ENCODE measurements at regions of chr5 and their contacts with region 1.

Region 1: GRCh38 chr5:134041570-134042411 is 37.0 kb upstream of the VDAC1 start:
- DNase-seq: no peak
- ATAC-seq: no peak
- H3K4me3 ChIP-seq: no peak overlapping the region
- H3K27ac ChIP-seq: no peak overlapping the region
- H3K4me1 ChIP-seq: no peaks in the 10 kb centered on the region
- H3K27me3 ChIP-seq: no peaks in the 10 kb centered on the region
- CTCF ChIP-seq: no peak

Region 2: DNA sequence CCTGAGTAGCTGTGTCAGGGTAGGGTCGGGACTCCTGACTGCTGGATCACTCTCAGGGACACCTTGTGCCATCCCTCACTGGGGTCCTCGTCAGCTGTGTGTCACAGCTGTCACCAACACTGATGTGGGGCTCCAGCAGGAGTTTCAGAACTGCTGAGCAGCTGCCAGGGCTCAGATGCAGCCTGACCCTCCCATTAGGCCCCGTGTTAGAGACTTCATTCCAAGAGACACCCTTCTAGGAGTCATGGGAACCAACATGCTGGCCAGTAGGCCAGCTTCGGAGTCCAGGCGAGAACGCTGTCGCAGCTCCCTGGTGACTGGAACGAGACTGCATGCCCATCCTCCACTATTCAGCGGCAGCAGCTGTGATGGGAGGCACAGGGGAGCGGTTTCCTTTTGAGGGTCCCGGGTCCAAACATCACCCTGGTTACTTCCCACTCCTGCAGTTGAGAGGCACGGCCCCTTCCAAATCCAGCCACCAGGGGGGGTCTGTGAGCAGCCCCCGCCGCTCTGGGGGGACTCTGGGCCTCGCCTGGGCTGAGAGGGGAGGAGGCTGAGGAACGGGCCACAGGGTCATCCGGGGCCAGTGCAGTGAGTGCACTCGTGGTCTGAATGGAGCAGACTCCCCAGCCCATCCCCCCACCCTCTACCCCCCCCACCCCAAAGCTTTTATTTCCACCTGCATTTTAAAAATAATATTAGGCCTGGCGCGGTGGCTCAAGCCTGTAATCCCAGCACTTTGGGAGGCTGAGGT is 60.1 kb after region 1 on chr5:
- intact Hi-C with region 1: no loop called
- DNase-seq: peak; percentile 37 to 92 (median 67)
- ATAC-seq: peak; percentile 76 to 93 (median 88)
- H3K4me3 ChIP-seq: no peak overlapping the region
- H3K27ac ChIP-seq: no peak overlapping the region
- H3K4me1 ChIP-seq: no peaks in the 10 kb centered on the region
- H3K27me3 ChIP-seq: no peaks in the 10 kb centered on the region
- CTCF ChIP-seq: peak; percentile 82 to 89 (median 84)

Region 3: GRCh38 chr5:134140530-134141201 is 98.9 kb after region 1 on chr5:
- intact Hi-C with region 1: loop called in 2 of 3 experiments (anchors 5 to 10 kb)
- DNase-seq: peak; percentile 50 to 84 (median 73)
- ATAC-seq: peak; percentile 69 to 89 (median 84)
- H3K4me3 ChIP-seq: no peak overlapping the region
- H3K27ac ChIP-seq: no peak overlapping the region
- H3K4me1 ChIP-seq: no peaks in the 10 kb centered on the region
- H3K27me3 ChIP-seq: no peaks in the 10 kb centered on the region
- CTCF ChIP-seq: peak; percentile 55 to 74 (median 72)

Region 4: DNA sequence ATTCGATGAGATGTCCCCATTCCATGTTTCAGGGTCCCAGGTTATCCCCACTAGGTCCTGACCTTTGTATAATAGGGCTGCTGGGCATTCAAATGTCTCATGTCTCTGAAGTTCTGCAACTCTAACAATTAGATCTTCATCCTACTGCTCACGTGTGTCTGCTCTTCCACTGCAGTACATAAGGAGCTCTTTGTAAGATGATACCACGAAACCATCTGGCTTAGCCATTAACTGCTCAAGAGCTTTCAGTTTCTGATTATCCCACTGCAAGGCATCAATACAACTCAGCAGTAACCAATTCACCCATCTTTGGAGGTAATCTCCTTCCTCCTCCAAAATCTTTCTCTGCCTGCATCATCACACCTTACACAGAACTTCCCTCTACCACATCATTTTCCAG is 234.0 kb after region 1 on chr5:
- intact Hi-C with region 1: loop called in 1 of 3 experiments (anchors 10 kb)
- DNase-seq: no peak
- ATAC-seq: peak in 1 of 4 donors; percentile 23
- H3K4me3 ChIP-seq: no peak overlapping the region
- H3K27ac ChIP-seq: no peak overlapping the region
- H3K4me1 ChIP-seq: no peaks in the 10 kb centered on the region
- H3K27me3 ChIP-seq: no peaks in the 10 kb centered on the region
- CTCF ChIP-seq: no peak

Region 5: GRCh38 chr5:134458234-134459012 is 416.6 kb after region 1 on chr5:
- intact Hi-C with region 1: no loop called
- DNase-seq: peak in 2 of 6 donors; percentile 33 to 63
- ATAC-seq: peak in 2 of 4 donors; percentile 27 to 61
- H3K4me3 ChIP-seq: no peak overlapping the region
- H3K27ac ChIP-seq: no peak overlapping the region
- H3K4me1 ChIP-seq: no peaks in the 10 kb centered on the region
- H3K27me3 ChIP-seq: no peaks in the 10 kb centered on the region
- CTCF ChIP-seq: no peak